B cell (primary cell): ENCODE measurements at regions of chr10 and their contacts with region 1.

Region 1: DNA sequence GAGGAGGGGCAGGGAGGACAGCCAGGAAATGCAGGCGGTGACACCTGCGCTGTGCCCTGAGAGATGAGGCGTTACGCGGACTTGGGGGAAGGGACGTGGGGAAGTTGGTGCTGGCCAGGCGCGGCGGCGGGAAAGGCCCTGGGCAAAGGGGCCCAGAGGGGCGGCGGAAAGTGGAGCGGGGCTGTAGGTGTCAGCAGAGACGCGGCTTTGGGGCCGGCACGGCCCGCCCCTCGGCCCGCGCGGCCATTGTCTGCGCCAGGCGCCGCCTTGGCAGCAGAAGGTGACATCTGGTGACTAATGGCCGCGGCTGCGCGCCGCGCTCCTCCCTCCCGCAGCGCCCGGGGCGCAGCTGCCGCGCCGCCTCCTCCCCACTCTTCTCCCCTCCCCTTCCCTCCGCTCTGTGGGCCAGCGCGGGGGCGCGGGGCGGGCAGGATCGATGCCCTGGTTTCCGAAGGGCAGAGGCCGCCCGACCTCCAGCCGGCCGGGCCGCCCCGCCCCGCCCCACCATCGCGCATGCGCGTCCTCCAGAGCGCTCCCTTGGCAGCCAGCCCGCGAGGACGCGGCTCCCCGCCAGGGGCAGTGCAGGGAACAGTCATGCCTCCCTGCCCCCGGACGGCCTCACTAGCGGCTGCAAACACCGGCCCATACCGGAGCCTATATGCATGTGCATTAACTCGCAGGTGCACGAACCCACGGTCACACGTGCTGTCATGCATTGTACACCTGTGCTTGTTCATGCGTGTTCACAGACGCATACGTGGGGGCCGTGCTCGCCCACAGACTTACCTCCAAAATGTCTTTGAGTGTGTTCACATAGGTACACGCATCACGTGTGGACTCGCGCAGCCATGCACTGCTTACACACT is 269.6 kb downstream of the RPS24 start:
- DNase-seq: peak; percentile 98
- ATAC-seq: peak; percentile 86
- H3K4me3 ChIP-seq: peak overlapping the region; percentile 59 to 81 (median 66)
- H3K4me3 Mint-ChIP-seq: peak overlapping the region; percentile 97
- H3K27ac ChIP-seq: peak overlapping the region; percentile 80 to 93
- H3K27ac Mint-ChIP-seq: peak overlapping the region; percentile 98
- H3K4me1 ChIP-seq: peaks cover 32 to 48% of the 10 kb centered on the region in 2 donors
- H3K4me1 Mint-ChIP-seq: peaks cover 45% of the 10 kb centered on the region
- H3K27me3 ChIP-seq: no peaks in the 10 kb centered on the region
- H3K27me3 Mint-ChIP-seq: no peaks in the 10 kb centered on the region
- CTCF ChIP-seq: peak; percentile 85

Region 2: DNA sequence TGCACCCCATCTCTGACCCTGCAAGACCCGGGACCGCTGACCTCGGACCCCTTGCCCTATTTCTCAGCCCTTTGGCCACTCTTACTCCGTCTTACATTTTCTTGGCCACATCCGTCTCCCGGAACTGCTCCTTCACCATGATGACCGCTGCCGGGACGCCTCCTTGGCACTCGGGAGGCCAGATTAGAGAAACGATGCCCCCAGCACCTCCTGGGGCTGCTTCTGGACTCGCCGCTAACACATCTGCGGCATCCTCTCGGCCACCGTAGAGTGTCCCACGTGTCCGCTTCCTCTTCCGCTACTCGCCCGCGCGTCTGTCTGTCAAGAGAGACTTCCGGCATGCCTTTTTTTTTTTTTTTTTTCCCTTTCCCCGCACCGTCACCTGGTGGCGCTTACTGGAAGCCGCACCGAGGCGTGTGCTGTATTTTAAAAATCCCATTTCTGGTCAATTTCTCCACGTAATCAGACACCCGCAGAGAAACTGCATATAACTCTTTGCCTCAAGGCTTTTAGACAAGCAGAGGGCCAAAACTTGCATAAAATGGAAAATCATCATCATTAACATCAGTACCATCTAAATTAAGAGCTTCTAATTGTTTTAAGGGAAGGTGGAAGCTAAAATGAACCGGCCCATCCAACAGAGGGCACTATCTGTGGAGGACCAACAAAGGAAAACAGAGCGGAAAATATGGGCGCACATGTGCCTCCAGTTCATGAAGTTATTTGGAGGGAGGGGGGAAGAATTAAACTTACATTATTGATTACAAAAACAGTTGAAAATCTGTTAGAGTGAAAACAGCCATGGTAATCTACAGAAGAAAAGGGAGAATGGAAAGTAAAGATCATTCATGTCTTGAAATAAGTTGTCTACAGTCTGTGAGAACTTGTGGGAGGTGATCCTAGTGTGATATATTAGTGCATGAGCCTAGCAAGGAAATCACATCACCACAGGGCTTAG is 273.7 kb before region 1 on chr10 and contains the start of gene POLR3A:
- CTCF ChIA-PET with region 1: no interaction called
- POLR2A ChIA-PET with region 1: no interaction called
- intact Hi-C with region 1: loop called (anchors 1 kb)
- DNase-seq: peak; percentile 96
- ATAC-seq: peak; percentile 60
- H3K4me3 ChIP-seq: peak within 1 kb of the TSS; percentile 78 to 100 (median 96)
- H3K4me3 Mint-ChIP-seq: peak within 1 kb of the TSS; percentile 99
- H3K27ac ChIP-seq: peak within 1 kb of the TSS; percentile 43 to 81
- H3K27ac Mint-ChIP-seq: peak within 1 kb of the TSS; percentile 89
- H3K4me1 ChIP-seq: peaks cover 18 to 28% of the 10 kb centered on the region in 2 donors
- H3K4me1 Mint-ChIP-seq: peaks cover 37% of the 10 kb centered on the region
- H3K27me3 ChIP-seq: no peaks in the 10 kb centered on the region
- H3K27me3 Mint-ChIP-seq: no peaks in the 10 kb centered on the region
- CTCF ChIP-seq: peak; percentile 64
- total RNA-seq, gene POLR3A: 18.3 and 18.4 TPM in 2 replicates

Region 3: GRCh38 chr10:78231939-78232338 is 71.3 kb before region 1 on chr10:
- CTCF ChIA-PET with region 1: interaction called, 3 read pairs
- POLR2A ChIA-PET with region 1: no interaction called
- intact Hi-C with region 1: loop called (anchors 1 kb)
- DNase-seq: no peak
- ATAC-seq: no peak
- H3K4me3 ChIP-seq: no peak overlapping the region
- H3K4me3 Mint-ChIP-seq: no peak overlapping the region
- H3K27ac ChIP-seq: no peak overlapping the region
- H3K27ac Mint-ChIP-seq: no peak overlapping the region
- H3K4me1 ChIP-seq: no peaks in the 10 kb centered on the region
- H3K4me1 Mint-ChIP-seq: no peaks in the 10 kb centered on the region
- H3K27me3 ChIP-seq: peaks cover 0 to 3% (median 0%) of the 10 kb centered on the region in 4 experiments
- H3K27me3 Mint-ChIP-seq: peaks cover 16% of the 10 kb centered on the region
- CTCF ChIP-seq: no peak

Region 4: DNA sequence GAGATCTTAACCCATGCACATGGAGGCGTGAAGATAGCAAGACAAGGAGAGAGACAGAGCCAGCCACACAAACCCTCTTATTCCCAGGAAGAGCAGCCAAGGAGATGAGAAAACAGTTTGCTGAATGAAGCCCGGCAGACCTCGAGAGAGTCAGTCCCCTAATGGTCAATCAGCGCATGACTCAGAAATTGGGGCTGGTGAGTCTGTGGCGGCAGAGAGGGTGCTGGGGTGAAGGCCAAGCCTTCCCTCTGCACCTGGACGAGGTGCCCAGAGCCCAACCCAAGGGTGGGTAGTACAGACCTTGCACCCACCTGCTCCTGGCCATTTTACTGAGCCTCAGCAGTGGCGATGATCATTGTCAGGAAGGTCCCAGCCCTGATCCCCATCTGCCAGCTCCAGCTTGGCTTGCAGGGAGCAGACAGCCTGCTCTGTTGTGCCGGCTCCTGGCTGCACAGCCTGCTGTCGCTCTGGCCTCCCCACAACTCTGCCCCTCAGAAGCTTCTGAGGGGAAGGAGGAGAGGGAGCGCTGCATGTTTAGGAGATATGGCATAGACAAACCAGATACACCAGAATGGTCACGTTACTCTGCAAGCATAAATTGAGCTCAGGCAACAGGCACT is 13.0 kb before region 1 on chr10:
- CTCF ChIA-PET with region 1: no interaction called
- POLR2A ChIA-PET with region 1: no interaction called
- intact Hi-C with region 1: no loop called
- DNase-seq: no peak
- ATAC-seq: no peak
- H3K4me3 ChIP-seq: no peak overlapping the region
- H3K4me3 Mint-ChIP-seq: no peak overlapping the region
- H3K27ac ChIP-seq: no peak overlapping the region
- H3K27ac Mint-ChIP-seq: no peak overlapping the region
- H3K4me1 ChIP-seq: peaks cover 5 to 10% of the 10 kb centered on the region in 2 donors
- H3K4me1 Mint-ChIP-seq: peaks cover 7% of the 10 kb centered on the region
- H3K27me3 ChIP-seq: no peaks in the 10 kb centered on the region
- H3K27me3 Mint-ChIP-seq: peaks cover 2% of the 10 kb centered on the region
- CTCF ChIP-seq: no peak

Region 5: DNA sequence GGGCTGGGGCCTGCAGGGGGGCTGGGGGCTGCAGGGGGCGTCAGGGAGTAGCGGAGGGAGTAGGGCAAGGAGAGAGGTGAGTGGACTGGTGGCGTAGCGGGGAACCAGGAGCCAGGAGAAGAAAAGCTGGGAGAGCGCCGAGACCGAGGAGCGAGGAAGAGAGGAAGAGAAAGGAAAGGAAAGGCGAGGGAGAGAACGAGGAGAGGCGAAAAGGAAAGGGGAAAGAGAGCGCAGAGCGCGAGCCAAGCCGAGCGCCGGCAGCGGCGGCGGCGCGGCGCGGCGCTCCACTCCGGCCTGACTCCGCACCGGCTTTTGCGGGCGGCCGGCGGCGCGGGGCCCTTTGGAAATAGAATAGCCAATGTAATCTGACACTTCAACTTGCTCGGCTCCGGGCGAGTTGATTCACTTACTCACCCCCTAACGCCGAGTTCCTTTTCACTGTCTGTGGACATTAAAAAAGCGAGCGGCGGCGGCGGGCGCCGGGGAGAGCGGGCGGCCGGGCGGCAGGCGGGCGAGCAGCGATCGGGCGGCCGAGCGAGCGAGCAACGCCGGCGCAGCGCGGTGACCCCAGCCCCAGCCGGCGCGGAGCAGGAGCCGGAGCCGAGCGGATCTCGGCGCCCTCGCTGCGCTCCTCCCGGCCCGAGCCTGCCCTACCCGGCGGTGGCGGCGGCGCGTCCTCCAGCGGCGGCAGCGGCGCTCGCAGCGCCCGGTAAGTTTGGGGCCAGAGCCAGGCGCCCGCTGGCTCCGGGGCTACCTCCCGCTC is 765.5 kb after region 1 on chr10 and contains the start of gene ZMIZ1:
- CTCF ChIA-PET with region 1: no interaction called
- POLR2A ChIA-PET with region 1: no interaction called
- intact Hi-C with region 1: loop called (anchors 1 kb)
- DNase-seq: peak; percentile 87
- ATAC-seq: peak; percentile 58
- H3K4me3 ChIP-seq: peak within 1 kb of the TSS; percentile 61 to 94 (median 67)
- H3K4me3 Mint-ChIP-seq: peak within 1 kb of the TSS; percentile 97
- H3K27ac ChIP-seq: no peak within 1 kb of the TSS
- H3K27ac Mint-ChIP-seq: peak within 1 kb of the TSS; percentile 74
- H3K4me1 ChIP-seq: peaks cover 18 to 35% of the 10 kb centered on the region in 2 donors
- H3K4me1 Mint-ChIP-seq: peaks cover 37% of the 10 kb centered on the region
- H3K27me3 ChIP-seq: peaks cover 0 to 30% (median 25%) of the 10 kb centered on the region in 4 experiments
- H3K27me3 Mint-ChIP-seq: peaks cover 28% of the 10 kb centered on the region
- CTCF ChIP-seq: peak; percentile 2
- total RNA-seq, gene ZMIZ1: 59.6 and 64.9 TPM in 2 replicates

Region 6: DNA sequence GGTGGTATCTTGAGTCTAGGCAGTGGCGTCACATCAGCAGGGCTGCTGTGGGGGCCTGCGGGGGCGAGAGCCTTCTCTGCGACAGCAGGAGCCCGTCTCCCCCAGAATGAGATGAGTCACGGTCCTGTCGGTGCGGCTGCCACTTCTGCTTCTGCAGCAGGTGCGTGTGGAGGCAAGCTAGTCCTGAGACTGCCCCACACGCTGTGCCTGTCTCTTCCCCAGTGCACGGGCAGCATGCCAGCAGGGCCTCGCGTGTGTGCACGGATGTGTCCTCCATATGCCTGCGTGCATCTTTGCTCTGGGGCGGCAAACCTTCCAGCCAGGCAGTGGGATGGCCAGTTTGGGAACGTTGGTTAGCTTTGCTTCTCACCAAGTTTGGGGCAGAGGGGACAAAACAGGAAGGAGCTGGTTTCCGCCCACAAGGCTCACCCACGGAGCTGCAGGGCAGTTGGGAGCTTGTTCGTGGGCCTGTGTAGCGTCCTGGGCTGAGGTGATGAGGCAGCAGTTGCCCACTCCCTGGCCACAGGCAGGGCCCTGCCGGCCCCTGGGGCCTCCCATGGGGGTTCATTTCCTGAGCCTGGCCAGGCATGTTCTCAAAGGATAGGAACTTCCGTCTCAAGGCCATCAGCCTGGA is 983.2 kb after region 1 on chr10:
- CTCF ChIA-PET with region 1: no interaction called
- POLR2A ChIA-PET with region 1: no interaction called
- intact Hi-C with region 1: loop called (anchors 1 kb)
- DNase-seq: peak; percentile 93
- ATAC-seq: peak; percentile 92
- H3K4me3 ChIP-seq: peak overlapping the region in 4 of 5 experiments; percentile 1 to 40 (median 23)
- H3K4me3 Mint-ChIP-seq: peak overlapping the region; percentile 84
- H3K27ac ChIP-seq: peak overlapping the region; percentile 80 to 88
- H3K27ac Mint-ChIP-seq: peak overlapping the region; percentile 97
- H3K4me1 ChIP-seq: peaks cover 52 to 66% of the 10 kb centered on the region in 2 donors
- H3K4me1 Mint-ChIP-seq: peaks cover 79% of the 10 kb centered on the region
- H3K27me3 ChIP-seq: no peaks in the 10 kb centered on the region
- H3K27me3 Mint-ChIP-seq: no peaks in the 10 kb centered on the region
- CTCF ChIP-seq: no peak

Region 7: DNA sequence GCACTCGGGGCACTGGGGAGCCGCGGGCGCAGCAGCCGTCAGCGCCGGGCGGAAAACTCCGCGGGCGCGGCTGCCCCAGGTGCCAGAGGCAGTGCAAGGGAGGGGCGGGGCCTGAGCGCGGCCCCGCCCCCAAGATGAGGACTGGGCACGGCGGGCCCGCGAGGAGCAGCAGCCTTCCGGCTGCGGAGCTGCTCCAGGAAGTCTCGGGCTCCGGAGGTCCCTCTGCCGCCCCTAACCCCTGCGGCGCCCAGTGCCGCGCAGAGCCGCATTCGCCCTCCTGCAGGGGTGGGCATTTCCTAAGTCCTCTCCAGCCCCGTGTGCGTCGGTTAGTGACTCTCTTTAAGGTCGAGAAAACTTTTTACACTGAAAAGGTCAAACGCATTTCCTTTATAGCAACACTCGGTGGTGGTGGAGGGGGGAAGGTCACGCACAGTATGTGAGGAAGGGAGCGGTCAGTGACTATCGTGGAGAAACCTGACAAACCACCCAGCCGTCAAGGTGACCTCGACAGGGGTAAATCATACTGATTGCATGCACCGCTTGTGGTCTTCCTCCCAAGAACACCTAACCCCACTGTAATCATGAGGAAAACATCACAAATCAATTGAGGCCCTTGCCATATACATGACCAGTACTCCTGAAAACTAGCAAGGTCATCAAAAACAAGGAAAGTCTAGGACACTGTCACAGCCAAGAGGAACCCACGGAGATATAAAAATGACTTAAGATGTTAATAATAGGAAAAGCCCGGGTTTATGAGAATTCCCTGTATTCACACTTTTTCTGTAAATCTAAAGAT is 1902.5 kb after region 1 on chr10 and contains the start of gene ANXA11:
- CTCF ChIA-PET with region 1: no interaction called
- POLR2A ChIA-PET with region 1: no interaction called
- intact Hi-C with region 1: loop called (anchors 5 kb)
- DNase-seq: peak; percentile 90
- ATAC-seq: peak; percentile 87
- H3K4me3 ChIP-seq: peak within 1 kb of the TSS; percentile 53 to 90 (median 74)
- H3K4me3 Mint-ChIP-seq: peak within 1 kb of the TSS; percentile 94
- H3K27ac ChIP-seq: peak within 1 kb of the TSS; percentile 75 to 91
- H3K27ac Mint-ChIP-seq: peak within 1 kb of the TSS; percentile 97
- H3K4me1 ChIP-seq: peaks cover 41 to 50% of the 10 kb centered on the region in 2 donors
- H3K4me1 Mint-ChIP-seq: peaks cover 50% of the 10 kb centered on the region
- H3K27me3 ChIP-seq: peaks cover 0 to 2% (median 0%) of the 10 kb centered on the region in 4 experiments
- H3K27me3 Mint-ChIP-seq: no peaks in the 10 kb centered on the region
- CTCF ChIP-seq: no peak
- total RNA-seq, gene ANXA11: 156 and 177 TPM in 2 replicates